Endothelial cell of umbilical vein (primary cell): ENCODE measurements at regions of chr4 and their contacts with region 1.

Region 1: DNA sequence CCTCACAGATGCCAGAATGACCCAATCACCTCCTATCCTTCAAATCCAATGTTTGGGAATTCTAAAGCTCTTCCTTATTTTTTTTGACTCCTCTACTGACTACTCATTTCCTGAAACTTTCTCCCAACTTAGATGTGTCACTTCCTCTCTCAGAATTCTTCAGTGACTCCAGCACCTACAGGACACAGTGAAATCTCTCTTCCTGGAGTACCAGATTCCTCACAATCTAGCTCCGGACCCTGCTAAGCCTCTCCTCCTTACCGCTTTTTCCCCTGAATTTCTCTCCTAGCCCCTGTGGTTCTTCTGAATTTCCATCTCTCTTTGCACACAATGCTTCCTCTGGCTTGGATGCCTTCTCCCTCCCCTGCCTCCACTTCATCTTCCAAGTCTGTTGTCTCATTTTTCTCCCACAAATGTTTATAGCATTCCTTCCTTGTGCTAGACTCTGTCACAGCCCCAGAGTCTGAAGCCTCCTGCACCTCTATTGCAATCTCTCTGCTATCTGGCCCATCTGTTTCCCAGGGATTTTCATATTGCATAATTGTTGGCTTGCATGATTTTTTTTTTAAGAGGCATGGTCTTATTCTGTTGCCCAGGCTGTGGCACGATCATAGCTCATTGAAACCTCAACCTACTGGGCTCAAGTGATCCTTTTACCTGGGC is 80.1 kb downstream of the ANAPC4 start:
- DNase-seq: peak; percentile 83
- H3K4me3 ChIP-seq: peak overlapping the region in 1 of 3 experiments; percentile 31
- H3K27ac ChIP-seq: peak overlapping the region; percentile 96
- H3K4me1 ChIP-seq: peaks cover 27% of the 10 kb centered on the region
- H3K27me3 ChIP-seq: no peaks in the 10 kb centered on the region
- CTCF ChIP-seq: no peak
- POLR2A ChIP-seq: peak; percentile 63

Region 2: DNA sequence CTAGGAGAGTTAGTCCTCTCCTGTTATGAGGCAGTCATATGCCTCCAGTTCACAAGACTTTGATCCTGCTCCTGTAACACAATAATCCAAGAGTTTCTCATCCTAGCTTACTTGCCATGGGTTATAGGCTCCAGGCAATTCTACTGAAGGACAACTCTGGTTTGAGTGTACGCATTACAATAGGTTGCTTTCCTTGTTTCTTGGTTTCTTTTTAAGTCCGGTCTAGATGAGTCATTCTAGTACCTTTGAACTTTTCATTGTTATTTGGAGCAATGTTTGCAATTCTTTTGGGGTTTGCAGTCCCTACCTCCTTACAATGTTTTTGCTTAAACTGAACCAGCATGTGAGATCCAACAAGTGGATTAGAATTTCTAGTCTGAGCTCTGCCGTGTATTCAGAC is 29.0 kb after region 1 on chr4:
- CTCF ChIA-PET with region 1: interaction called, 4 read pairs
- POLR2A ChIA-PET with region 1: interaction called, 3 read pairs
- dilution Hi-C with region 1: no loop called
- intact Hi-C with region 1: loop called (anchors 1 kb)
- DNase-seq: peak; percentile 90
- H3K4me3 ChIP-seq: peak overlapping the region in 1 of 3 experiments; percentile 1
- H3K27ac ChIP-seq: peak overlapping the region; percentile 74
- H3K4me1 ChIP-seq: peaks cover 23% of the 10 kb centered on the region
- H3K27me3 ChIP-seq: no peaks in the 10 kb centered on the region
- CTCF ChIP-seq: no peak
- POLR2A ChIP-seq: no peak

Region 3: GRCh38 chr4:25592736-25593135 is 135.6 kb after region 1 on chr4:
- CTCF ChIA-PET with region 1: no interaction called
- POLR2A ChIA-PET with region 1: no interaction called
- dilution Hi-C with region 1: no loop called
- intact Hi-C with region 1: no loop called
- DNase-seq: no peak
- H3K4me3 ChIP-seq: no peak overlapping the region
- H3K27ac ChIP-seq: no peak overlapping the region
- H3K4me1 ChIP-seq: no peaks in the 10 kb centered on the region
- H3K27me3 ChIP-seq: no peaks in the 10 kb centered on the region
- CTCF ChIP-seq: no peak
- POLR2A ChIP-seq: no peak

Region 4: GRCh38 chr4:25913851-25914669 is 456.9 kb after region 1 on chr4 and contains the start of gene SMIM20:
- CTCF ChIA-PET with region 1: no interaction called
- POLR2A ChIA-PET with region 1: no interaction called
- dilution Hi-C with region 1: no loop called
- intact Hi-C with region 1: loop called (anchors 5 kb)
- DNase-seq: peak; percentile 78
- H3K4me3 ChIP-seq: peak within 1 kb of the TSS; percentile 54 to 79 (median 67)
- H3K27ac ChIP-seq: peak within 1 kb of the TSS; percentile 58
- H3K4me1 ChIP-seq: peaks cover 8% of the 10 kb centered on the region
- H3K27me3 ChIP-seq: no peaks in the 10 kb centered on the region
- CTCF ChIP-seq: no peak
- POLR2A ChIP-seq: peak; percentile 85
- total RNA-seq, gene SMIM20: 18.1 and 19.2 TPM in 2 replicates